ENCODE measurements at regions of chr22 and their contacts with region 1.

Region 1: DNA sequence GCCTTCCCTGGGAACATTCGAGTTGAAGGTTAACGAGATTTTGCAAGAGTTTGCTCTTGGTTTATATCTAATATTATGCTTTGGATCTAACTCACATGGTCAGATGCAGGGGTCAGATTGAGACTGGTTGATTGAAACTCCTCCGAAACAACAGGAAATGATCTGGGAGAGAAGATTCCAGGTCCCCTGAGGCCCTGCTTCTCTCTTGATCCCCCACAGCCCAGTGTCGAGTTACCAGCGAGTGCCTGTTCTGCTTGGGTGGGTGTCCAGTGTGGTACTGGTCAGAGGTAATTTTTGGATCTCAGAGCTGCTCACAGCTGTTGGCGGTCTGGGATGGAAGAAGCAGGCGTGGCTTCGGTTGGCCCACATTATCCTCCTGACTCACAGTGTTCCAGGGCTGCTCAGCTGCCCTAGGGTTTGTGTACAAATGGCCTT is 9.2 kb downstream of the FBLN1 start:
- DNase-seq: peak; percentile 78 to 84
- ATAC-seq: peak; percentile 89 to 96
- H3K4me3 ChIP-seq: no peak overlapping the region
- H3K27ac ChIP-seq: peak overlapping the region; percentile 77 to 81 (median 80)
- H3K4me1 ChIP-seq: peaks cover 10 to 15% of the 10 kb centered on the region in 2 donors
- H3K27me3 ChIP-seq: no peaks in the 10 kb centered on the region
- CTCF ChIP-seq: no peak
- POLR2A ChIP-seq: peak; percentile 34 to 39

Region 2: DNA sequence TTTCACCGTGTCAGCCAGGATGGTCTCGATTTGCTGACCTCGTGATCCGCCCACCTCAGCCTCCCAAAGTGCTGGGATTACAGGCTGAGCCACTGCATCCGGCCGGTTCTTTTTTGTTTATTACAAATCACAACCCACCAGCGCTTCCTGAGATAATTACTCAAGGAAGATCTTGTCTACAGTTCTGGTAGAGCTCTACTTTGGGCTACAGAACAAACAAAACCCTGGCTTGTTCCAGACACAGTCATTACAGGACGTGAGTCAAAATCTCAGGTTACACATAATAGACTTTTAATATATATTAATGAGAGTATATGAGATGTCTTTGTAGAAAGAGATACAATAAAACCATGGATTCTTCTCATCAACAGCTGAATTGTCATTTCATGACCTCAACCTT is 390.9 kb before region 1 on chr22:
- in situ Hi-C with region 1: no loop called
- intact Hi-C with region 1: no loop called
- DNase-seq: no peak
- ATAC-seq: no peak
- H3K4me3 ChIP-seq: no peak overlapping the region
- H3K27ac ChIP-seq: no peak overlapping the region
- H3K4me1 ChIP-seq: no peaks in the 10 kb centered on the region
- H3K27me3 ChIP-seq: peaks cover 0 to 28% (median 11%) of the 10 kb centered on the region in 3 donors
- CTCF ChIP-seq: no peak
- POLR2A ChIP-seq: no peak

Region 3: GRCh38 chr22:45424231-45424731 is 87.6 kb before region 1 on chr22:
- in situ Hi-C with region 1: no loop called
- intact Hi-C with region 1: no loop called
- DNase-seq: peak; percentile 20 to 33
- ATAC-seq: no peak
- H3K4me3 ChIP-seq: no peak overlapping the region
- H3K27ac ChIP-seq: no peak overlapping the region
- H3K4me1 ChIP-seq: no peaks in the 10 kb centered on the region
- H3K27me3 ChIP-seq: no peaks in the 10 kb centered on the region
- CTCF ChIP-seq: no peak
- POLR2A ChIP-seq: no peak

Region 4: DNA sequence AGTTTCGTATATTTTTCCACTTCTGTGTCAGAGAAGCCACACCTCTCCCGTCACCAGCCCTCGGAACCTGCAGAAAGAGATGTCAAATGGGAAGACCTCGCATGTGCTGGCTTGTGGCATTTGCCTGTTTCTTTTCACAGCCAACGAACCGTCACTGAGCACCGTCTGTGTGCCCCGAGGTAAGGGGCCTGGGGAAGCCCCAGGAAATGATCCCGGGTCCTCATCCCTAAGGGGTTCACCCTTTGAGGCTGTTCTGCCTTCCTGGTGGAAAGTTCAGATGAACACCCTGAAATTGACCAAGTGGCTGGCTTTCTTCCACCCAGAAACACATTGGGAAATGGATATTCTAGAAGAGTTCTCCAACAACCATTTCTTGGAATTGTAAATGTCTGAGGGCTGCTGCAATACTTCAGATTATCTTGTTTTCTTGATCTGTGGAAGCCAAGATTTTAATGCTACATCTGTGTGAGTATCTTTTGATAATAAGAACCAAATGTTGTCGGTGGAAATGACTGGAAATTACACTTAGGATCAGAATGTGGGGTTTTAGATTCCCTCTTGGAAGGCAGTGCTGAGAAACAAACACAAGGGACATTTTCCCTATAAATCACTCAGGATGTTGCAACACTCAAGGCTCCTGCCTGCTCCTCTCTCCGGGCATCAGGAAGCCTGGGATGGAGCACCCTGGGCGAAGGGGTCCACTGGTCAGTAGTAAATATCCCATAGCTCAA is 60.8 kb before region 1 on chr22:
- in situ Hi-C with region 1: no loop called
- intact Hi-C with region 1: loop called (anchors 5 kb)
- DNase-seq: peak in 1 of 2 donors; percentile 36
- ATAC-seq: peak; percentile 68 to 73
- H3K4me3 ChIP-seq: no peak overlapping the region
- H3K27ac ChIP-seq: peak overlapping the region in 3 of 4 donors; percentile 17 to 59 (median 54)
- H3K4me1 ChIP-seq: no peaks in the 10 kb centered on the region
- H3K27me3 ChIP-seq: no peaks in the 10 kb centered on the region
- CTCF ChIP-seq: no peak
- POLR2A ChIP-seq: no peak

Measured in gastrocnemius medialis (tissue), 4 donors.